ENCODE measurements at regions of chr9 and their contacts with region 1.

Region 1: GRCh38 chr9:87713278-87713987 is 12.5 kb upstream of the CTSL start:
- DNase-seq: peak; percentile 74 to 89
- H3K4me3 ChIP-seq: peak overlapping the region; percentile 31; the same call in 1 of the 2 replicates
- H3K27ac ChIP-seq: peak overlapping the region; percentile 92
- H3K4me1 ChIP-seq: peaks cover 37% of the 10 kb centered on the region
- H3K27me3 ChIP-seq: no peaks in the 10 kb centered on the region
- CTCF ChIP-seq: no peak

Region 2: DNA sequence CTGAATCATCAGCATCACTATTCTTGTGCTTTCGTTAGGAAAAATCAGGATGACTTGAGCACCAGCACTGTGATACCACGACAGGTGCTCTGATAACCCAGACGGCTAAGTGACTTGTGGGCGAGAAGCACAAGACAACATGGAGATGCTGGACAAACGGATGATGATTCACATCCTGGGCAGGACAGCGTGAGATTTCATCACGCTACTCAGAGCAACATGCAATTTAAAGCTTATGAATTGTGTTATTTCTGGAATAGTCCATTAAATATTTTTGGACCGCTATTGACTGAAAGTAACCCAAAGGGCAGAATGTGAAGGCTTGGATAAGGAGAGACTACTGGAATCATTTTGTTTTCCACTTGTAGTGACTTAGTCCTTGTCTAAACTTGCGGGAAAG is 330.5 kb before region 1 on chr9:
- CTCF ChIA-PET with region 1: no interaction called
- POLR2A ChIA-PET with region 1: interaction called, 33 read pairs
- intact Hi-C with region 1: no loop called
- DNase-seq: no peak
- H3K4me3 ChIP-seq: no peak overlapping the region
- H3K27ac ChIP-seq: no peak overlapping the region
- H3K4me1 ChIP-seq: peaks cover 48% of the 10 kb centered on the region
- H3K27me3 ChIP-seq: no peaks in the 10 kb centered on the region
- CTCF ChIP-seq: no peak

Region 3: DNA sequence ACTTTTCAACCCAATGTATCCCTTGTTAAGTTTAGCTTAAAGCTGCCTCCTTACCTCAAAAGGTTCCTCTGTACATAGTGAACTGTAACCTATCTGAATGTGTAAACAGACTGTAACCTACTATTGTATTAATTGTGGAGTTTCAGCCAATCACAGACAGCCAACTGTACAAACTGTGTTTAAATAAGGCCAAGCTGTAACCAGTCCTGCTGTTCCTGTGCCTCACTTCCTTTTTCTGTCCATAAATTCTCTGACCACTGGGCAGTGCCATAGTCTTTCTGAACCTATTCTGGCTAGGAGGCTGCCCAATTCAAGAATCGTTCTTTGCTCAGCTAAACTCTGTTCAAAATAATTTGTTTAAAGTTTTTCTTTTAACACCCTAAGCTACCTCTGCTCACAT is 290.4 kb before region 1 on chr9:
- CTCF ChIA-PET with region 1: no interaction called
- POLR2A ChIA-PET with region 1: no interaction called
- intact Hi-C with region 1: no loop called
- DNase-seq: no peak
- H3K4me3 ChIP-seq: no peak overlapping the region
- H3K27ac ChIP-seq: no peak overlapping the region
- H3K4me1 ChIP-seq: peaks cover 11% of the 10 kb centered on the region
- H3K27me3 ChIP-seq: no peaks in the 10 kb centered on the region
- CTCF ChIP-seq: no peak

Region 4: DNA sequence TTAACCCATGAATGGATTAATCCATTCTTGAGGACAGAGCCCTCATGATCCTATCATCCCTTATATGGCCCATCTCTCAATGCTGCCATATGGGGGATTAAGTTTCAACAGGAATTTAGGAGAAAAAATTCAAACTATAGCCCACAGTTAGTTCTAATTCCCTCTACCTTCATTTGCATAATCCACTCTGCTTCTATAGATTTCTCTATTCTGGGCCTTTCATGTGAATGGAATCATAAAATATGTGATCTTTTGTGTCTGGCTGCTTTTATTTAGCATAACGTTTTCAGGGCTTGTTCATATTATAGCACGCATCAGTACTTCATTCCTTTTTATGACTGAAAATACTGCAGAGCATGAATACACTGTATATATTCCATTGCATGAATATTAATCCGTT is 67.9 kb after region 1 on chr9:
- CTCF ChIA-PET with region 1: no interaction called
- POLR2A ChIA-PET with region 1: no interaction called
- intact Hi-C with region 1: no loop called
- DNase-seq: no peak
- H3K4me3 ChIP-seq: no peak overlapping the region
- H3K27ac ChIP-seq: no peak overlapping the region
- H3K4me1 ChIP-seq: 0 out of 2 replicates have a peak, but pooled peaks cover 3% of the 10 kb centered on the region
- H3K27me3 ChIP-seq: no peaks in the 10 kb centered on the region
- CTCF ChIP-seq: no peak

Region 5: DNA sequence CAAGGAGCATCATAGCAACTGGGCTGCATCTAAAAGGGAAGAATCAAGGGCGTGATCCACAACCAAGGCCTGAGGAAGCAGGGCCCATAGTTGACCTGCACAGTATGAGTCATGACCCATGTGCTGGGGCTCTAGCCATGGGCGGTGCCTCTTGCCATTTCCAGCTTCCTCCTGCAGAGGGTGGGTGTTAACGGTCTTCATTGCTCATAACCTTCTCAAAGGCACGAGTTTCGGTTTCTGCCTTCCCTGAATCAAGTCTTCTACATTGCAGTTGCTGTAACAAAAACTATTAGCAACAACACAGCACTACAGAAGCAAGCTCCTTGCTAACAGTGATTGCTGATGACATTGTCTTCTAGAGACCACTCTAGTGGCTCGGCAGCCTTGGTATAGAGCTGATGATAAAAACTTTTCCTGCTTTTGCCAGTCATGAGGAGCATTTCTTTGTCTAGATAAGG is 79.4 kb after region 1 on chr9:
- CTCF ChIA-PET with region 1: no interaction called
- POLR2A ChIA-PET with region 1: interaction called, 5 read pairs
- intact Hi-C with region 1: loop called (anchors 1 kb)
- DNase-seq: peak; percentile 90 to 98
- H3K4me3 ChIP-seq: peak overlapping the region; percentile 48; the same call in 1 of the 2 replicates
- H3K27ac ChIP-seq: peak overlapping the region; percentile 100
- H3K4me1 ChIP-seq: peaks cover 70% of the 10 kb centered on the region
- H3K27me3 ChIP-seq: no peaks in the 10 kb centered on the region
- CTCF ChIP-seq: peak; percentile 54